Activated CD4-positive, alpha-beta T cell treated with anti-CD3 and anti-CD28 coated beads, Interleukin-2, amount 10 ng/mL, durations not matched to agents 24 days and 14 days (primary cell): ENCODE measurements at regions of chr11 and their contacts with region 1.

Region 1: GRCh38 chr11:17077520-17078401 is at the start of gene RPS13:
- DNase-seq: peak; percentile 98
- H3K4me3 Mint-ChIP-seq: peak within 1 kb of the TSS; percentile 92
- H3K27ac Mint-ChIP-seq: peak within 1 kb of the TSS; percentile 98
- H3K4me1 Mint-ChIP-seq: peaks cover 24% of the 10 kb centered on the region
- H3K27me3 Mint-ChIP-seq: no peaks in the 10 kb centered on the region
- total RNA-seq, gene RPS13: 1,328 and 1,337 TPM in 2 replicates

Region 2: GRCh38 chr11:16738193-16738946 is 339.4 kb before region 1 on chr11 and contains the start of gene C11orf58:
- intact Hi-C with region 1: loop called (anchors 1 kb)
- DNase-seq: peak; percentile 98
- H3K4me3 Mint-ChIP-seq: no peak within 1 kb of the TSS
- H3K27ac Mint-ChIP-seq: peak within 1 kb of the TSS; percentile 77
- H3K4me1 Mint-ChIP-seq: peaks cover 16% of the 10 kb centered on the region
- H3K27me3 Mint-ChIP-seq: peaks cover 4% of the 10 kb centered on the region
- total RNA-seq, gene C11orf58: 142 and 149 TPM in 2 replicates

Region 3: GRCh38 chr11:16924826-16925560 is 152.8 kb before region 1 on chr11:
- intact Hi-C with region 1: loop called (anchors 5 kb)
- DNase-seq: no peak
- H3K4me3 Mint-ChIP-seq: peak overlapping the region; percentile 89
- H3K27ac Mint-ChIP-seq: no peak overlapping the region
- H3K4me1 Mint-ChIP-seq: peaks cover 17% of the 10 kb centered on the region
- H3K27me3 Mint-ChIP-seq: peaks cover 46% of the 10 kb centered on the region

Region 4: DNA sequence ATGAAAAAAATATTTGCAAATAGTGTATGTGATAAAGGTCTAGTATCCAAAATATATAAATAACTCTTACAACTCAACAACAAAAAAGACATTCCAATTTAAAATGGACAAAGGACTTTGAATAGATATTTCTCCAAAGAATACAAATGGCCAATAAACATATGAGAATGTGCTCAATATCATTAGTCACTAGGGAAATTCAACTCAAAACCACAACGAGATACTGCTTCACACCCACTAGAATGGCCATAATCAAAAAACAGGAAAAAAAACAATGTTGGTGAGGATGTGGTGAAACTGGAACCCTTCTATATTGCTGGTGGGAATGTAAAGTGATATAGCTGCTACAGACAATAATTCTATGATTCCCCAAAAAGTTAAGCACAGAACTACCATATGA is 38.4 kb after region 1 on chr11:
- intact Hi-C with region 1: no loop called
- DNase-seq: no peak
- H3K4me3 Mint-ChIP-seq: no peak overlapping the region
- H3K27ac Mint-ChIP-seq: no peak overlapping the region
- H3K4me1 Mint-ChIP-seq: peaks cover 4% of the 10 kb centered on the region
- H3K27me3 Mint-ChIP-seq: no peaks in the 10 kb centered on the region

Region 5: GRCh38 chr11:17207317-17208258 is 129.8 kb after region 1 on chr11 and contains the start of gene PIK3C2A:
- intact Hi-C with region 1: loop called (anchors 1 kb)
- DNase-seq: peak; percentile 99
- H3K4me3 Mint-ChIP-seq: peak within 1 kb of the TSS; percentile 97
- H3K27ac Mint-ChIP-seq: peak within 1 kb of the TSS; percentile 96
- H3K4me1 Mint-ChIP-seq: peaks cover 26% of the 10 kb centered on the region
- H3K27me3 Mint-ChIP-seq: no peaks in the 10 kb centered on the region
- total RNA-seq, gene PIK3C2A: 30.3 and 35.3 TPM in 2 replicates

Region 6: GRCh38 chr11:17504330-17505107 is 426.8 kb after region 1 on chr11:
- intact Hi-C with region 1: loop called (anchors 2 kb)
- DNase-seq: peak; percentile 95
- H3K4me3 Mint-ChIP-seq: no peak overlapping the region
- H3K27ac Mint-ChIP-seq: no peak overlapping the region
- H3K4me1 Mint-ChIP-seq: no peaks in the 10 kb centered on the region
- H3K27me3 Mint-ChIP-seq: peaks cover 16% of the 10 kb centered on the region